Heart left ventricle (tissue), 16 donors: ENCODE measurements at regions of chr12 and their contacts with region 1.

Region 1: GRCh38 chr12:49232940-49233841 is 31.7 kb upstream of the TUBA1C start:
- DNase-seq: peak; percentile 66 to 85 (median 82)
- ATAC-seq: peak; percentile 82 to 87 (median 83)
- H3K4me3 ChIP-seq: peak overlapping the region in 9 of 12 donors; percentile 2 to 64 (median 26)
- H3K27ac ChIP-seq: peak overlapping the region; percentile 83 to 96 (median 94)
- H3K4me1 ChIP-seq: peaks cover 3 to 46% (median 22%) of the 10 kb centered on the region in 12 donors
- H3K27me3 ChIP-seq: no peaks in the 10 kb centered on the region
- CTCF ChIP-seq: peak in 3 of 12 donors; percentile 22 to 33 (median 30)
- POLR2A ChIP-seq: no peak

Region 2: GRCh38 chr12:48795480-48796455 is 437.4 kb before region 1 on chr12:
- intact Hi-C with region 1: no loop called
- DNase-seq: peak in 3 of 5 donors; percentile 53 to 64 (median 63)
- ATAC-seq: peak; percentile 82 to 90 (median 90)
- H3K4me3 ChIP-seq: no peak overlapping the region
- H3K27ac ChIP-seq: no peak overlapping the region
- H3K4me1 ChIP-seq: peaks cover 0 to 7% (median 1%) of the 10 kb centered on the region in 12 donors
- H3K27me3 ChIP-seq: peaks cover 0 to 9% (median 0%) of the 10 kb centered on the region in 9 donors
- CTCF ChIP-seq: peak; percentile 85 to 97 (median 95)
- POLR2A ChIP-seq: no peak

Region 3: DNA sequence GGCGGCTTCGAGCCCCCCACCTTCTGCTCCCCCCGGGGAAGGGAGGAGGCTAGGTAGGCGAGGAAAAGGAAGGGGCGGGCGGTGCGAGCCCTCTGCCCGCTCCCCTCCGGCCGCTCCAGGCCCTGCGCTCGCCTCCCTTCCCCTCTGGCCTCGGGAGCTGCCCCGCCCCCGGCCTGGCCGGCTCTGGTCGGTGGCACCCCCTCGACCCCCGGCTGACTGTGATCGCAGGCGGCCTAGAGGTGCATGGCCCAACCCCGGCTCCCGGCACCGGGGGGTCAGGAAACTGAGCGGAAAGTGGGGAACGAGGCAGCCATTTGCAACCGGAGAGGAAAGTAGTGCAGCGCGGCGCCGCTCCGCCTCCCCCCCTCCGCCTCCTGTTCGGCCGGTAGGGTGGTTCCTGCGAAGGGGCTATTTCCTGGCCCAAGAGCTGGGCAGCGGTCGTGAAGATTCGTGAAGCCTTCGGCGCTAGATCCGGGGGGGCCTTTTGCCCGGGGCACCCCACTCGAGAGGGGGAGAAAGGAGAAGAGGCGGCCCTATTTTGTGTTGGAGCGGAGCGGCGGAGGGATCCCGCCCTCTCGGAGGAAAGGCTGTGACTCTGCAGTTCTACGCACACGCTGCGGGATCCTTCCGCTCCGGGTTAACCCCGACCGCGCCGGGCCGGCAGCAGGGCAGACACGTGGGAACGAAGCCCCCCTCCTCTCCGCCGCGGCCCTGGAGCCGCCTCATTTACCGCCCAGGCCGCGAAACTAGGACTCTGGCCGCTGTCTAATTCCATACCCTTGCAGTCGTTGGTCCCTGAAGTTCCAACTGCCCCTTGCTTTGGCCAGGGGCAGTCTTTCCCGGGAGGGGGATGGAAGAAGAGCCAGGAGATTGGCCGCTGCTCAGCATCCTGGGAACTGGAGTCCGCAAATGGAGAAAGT is 172.7 kb before region 1 on chr12 and contains the start of gene KMT2D:
- intact Hi-C with region 1: loop called in 7 of 10 experiments (anchors 2 to 5 kb)
- DNase-seq: peak; percentile 94 to 96 (median 95)
- ATAC-seq: peak; percentile 76 to 85 (median 84)
- H3K4me3 ChIP-seq: peak within 1 kb of the TSS; percentile 79 to 100 (median 93)
- H3K27ac ChIP-seq: peak within 1 kb of the TSS; percentile 94 to 99 (median 98)
- H3K4me1 ChIP-seq: peaks cover 18 to 53% (median 39%) of the 10 kb centered on the region in 12 donors
- H3K27me3 ChIP-seq: no peaks in the 10 kb centered on the region
- CTCF ChIP-seq: peak in 8 of 12 donors; percentile 8 to 44 (median 32)
- POLR2A ChIP-seq: peak in 1 of 2 donors; percentile 50
- total RNA-seq, gene KMT2D: 32.5 to 82.7 (median 55.6) TPM

Region 4: GRCh38 chr12:49069507-49070346 is 163.5 kb before region 1 on chr12 and contains the start of gene RHEBL1:
- intact Hi-C with region 1: loop called in 6 of 10 experiments (anchors 2 to 5 kb)
- DNase-seq: peak; percentile 98 to 99 (median 99)
- ATAC-seq: peak; percentile 100
- H3K4me3 ChIP-seq: peak within 1 kb of the TSS; percentile 52 to 90 (median 80)
- H3K27ac ChIP-seq: peak within 1 kb of the TSS in 10 of 12 donors; percentile 14 to 79 (median 68)
- H3K4me1 ChIP-seq: peaks cover 0 to 19% (median 14%) of the 10 kb centered on the region in 12 donors
- H3K27me3 ChIP-seq: no peaks in the 10 kb centered on the region
- CTCF ChIP-seq: peak in 1 of 12 donors; percentile 13
- POLR2A ChIP-seq: peak in 1 of 2 donors; percentile 53
- total RNA-seq, gene RHEBL1: 0.19 to 2.0 (median 0.72) TPM in 4 of 9 donors, not detected in the others

Region 5: GRCh38 chr12:49088190-49088931 is 144.8 kb before region 1 on chr12:
- intact Hi-C with region 1: loop called in 9 of 10 experiments (anchors 1 to 5 kb)
- DNase-seq: peak; percentile 73 to 83 (median 81)
- ATAC-seq: peak; percentile 82 to 93 (median 92)
- H3K4me3 ChIP-seq: peak overlapping the region in 6 of 12 donors; percentile 6 to 38 (median 20)
- H3K27ac ChIP-seq: no peak overlapping the region
- H3K4me1 ChIP-seq: peaks cover 10 to 55% (median 41%) of the 10 kb centered on the region in 12 donors
- H3K27me3 ChIP-seq: peaks cover 0 to 49% (median 29%) of the 10 kb centered on the region in 9 donors
- CTCF ChIP-seq: peak; percentile 84 to 94 (median 90)
- POLR2A ChIP-seq: no peak

Region 6: DNA sequence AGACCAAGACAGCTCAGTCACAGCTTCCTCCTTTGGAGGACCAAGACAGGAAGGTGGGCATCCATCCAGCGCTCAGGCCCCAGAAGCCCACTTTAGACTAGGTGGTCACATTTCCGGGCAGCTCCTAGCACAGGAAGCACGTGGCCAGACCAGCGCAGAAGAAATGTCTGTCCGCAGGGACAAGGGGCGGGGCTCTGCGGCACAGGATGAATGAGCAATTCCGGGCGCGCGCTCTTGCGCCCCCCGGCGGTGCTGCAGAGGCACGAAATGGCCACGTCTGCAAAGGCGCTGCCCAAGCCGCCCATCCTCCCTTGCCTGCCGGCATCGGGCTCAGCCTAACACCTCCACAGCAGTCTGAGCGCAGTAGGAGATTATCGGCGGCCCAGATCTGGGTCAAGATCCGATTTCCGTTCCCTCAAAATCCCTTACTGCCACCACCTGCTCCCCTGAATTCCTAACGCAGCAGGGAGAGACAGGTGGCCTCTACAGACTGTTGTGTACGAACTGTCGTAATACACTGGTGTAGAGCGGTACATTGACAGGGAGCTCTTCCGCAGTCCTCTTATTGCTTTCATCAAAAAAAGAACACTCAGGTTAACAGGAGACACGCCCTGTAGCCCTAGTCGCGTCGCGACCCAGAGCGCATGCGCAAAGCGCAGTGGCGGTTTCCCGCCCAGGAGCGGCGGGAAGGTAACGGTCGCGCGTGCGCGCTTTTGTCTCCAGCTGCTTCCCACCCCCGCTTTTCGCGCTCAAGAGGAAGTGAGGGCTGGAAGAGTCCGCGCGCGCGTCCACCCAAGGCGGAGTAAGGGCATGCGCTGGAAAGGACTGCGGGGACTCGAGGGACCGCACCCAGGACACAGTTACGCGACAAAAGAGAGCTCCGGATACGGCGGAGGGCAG is 102.8 kb before region 1 on chr12:
- intact Hi-C with region 1: loop called (anchors 1 to 5 kb)
- DNase-seq: peak; percentile 94 to 97 (median 96)
- ATAC-seq: peak; percentile 85 to 91 (median 86)
- H3K4me3 ChIP-seq: peak overlapping the region; percentile 54 to 100 (median 98)
- H3K27ac ChIP-seq: peak overlapping the region; percentile 93 to 100 (median 100)
- H3K4me1 ChIP-seq: peaks cover 4 to 44% (median 25%) of the 10 kb centered on the region in 12 donors
- H3K27me3 ChIP-seq: no peaks in the 10 kb centered on the region
- CTCF ChIP-seq: peak; percentile 85 to 98 (median 91)
- POLR2A ChIP-seq: no peak

Region 7: DNA sequence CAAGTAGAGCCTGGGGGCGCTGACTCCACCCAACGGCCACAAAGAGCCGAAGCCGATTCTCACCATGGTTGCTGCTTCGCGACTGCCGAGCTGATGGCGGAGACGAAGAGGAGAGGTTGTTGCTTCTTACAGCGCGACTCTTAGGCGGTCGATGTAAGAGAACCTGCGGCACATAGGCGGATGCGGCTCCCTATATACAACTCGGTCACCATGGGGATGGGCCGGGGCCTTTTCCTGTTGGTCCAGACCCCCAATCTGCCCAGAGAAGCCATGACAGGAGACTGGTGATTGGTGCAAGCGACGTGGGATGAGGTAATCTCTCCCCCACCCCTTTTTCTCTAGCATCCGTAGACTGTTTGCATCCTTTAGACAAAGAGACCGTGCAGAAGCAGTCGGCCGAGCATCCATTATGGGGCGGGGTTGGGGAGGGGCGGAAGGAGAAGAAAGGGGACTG is 44.2 kb before region 1 on chr12 and contains the start of gene TUBA1A:
- intact Hi-C with region 1: loop called in 9 of 10 experiments (anchors 1 to 5 kb)
- DNase-seq: peak; percentile 93 to 96 (median 95)
- ATAC-seq: peak; percentile 91 to 95 (median 93)
- H3K4me3 ChIP-seq: peak within 1 kb of the TSS; percentile 43 to 98 (median 88)
- H3K27ac ChIP-seq: peak within 1 kb of the TSS; percentile 90 to 100 (median 98)
- H3K4me1 ChIP-seq: peaks cover 0 to 32% (median 17%) of the 10 kb centered on the region in 12 donors
- H3K27me3 ChIP-seq: no peaks in the 10 kb centered on the region
- CTCF ChIP-seq: no peak
- POLR2A ChIP-seq: peak; percentile 27 to 93
- total RNA-seq, gene TUBA1A: 122 to 280 (median 184) TPM

Region 8: GRCh38 chr12:49198431-49199155 is 34.6 kb before region 1 on chr12:
- intact Hi-C with region 1: loop called in 1 of 10 experiments (anchors 5 kb)
- DNase-seq: peak; percentile 56 to 67 (median 62)
- ATAC-seq: peak in 3 of 4 donors; percentile 42 to 51 (median 48)
- H3K4me3 ChIP-seq: no peak overlapping the region
- H3K27ac ChIP-seq: peak overlapping the region in 3 of 12 donors; percentile 3 to 17 (median 7)
- H3K4me1 ChIP-seq: peaks cover 7 to 61% (median 21%) of the 10 kb centered on the region in 12 donors
- H3K27me3 ChIP-seq: no peaks in the 10 kb centered on the region
- CTCF ChIP-seq: no peak
- POLR2A ChIP-seq: no peak